Activated CD4-positive, alpha-beta memory T cell treated with anti-CD3 and anti-CD28 coated beads for 36 hours (primary cell): ENCODE measurements at regions of chr12 and their contacts with region 1.

Region 1: DNA sequence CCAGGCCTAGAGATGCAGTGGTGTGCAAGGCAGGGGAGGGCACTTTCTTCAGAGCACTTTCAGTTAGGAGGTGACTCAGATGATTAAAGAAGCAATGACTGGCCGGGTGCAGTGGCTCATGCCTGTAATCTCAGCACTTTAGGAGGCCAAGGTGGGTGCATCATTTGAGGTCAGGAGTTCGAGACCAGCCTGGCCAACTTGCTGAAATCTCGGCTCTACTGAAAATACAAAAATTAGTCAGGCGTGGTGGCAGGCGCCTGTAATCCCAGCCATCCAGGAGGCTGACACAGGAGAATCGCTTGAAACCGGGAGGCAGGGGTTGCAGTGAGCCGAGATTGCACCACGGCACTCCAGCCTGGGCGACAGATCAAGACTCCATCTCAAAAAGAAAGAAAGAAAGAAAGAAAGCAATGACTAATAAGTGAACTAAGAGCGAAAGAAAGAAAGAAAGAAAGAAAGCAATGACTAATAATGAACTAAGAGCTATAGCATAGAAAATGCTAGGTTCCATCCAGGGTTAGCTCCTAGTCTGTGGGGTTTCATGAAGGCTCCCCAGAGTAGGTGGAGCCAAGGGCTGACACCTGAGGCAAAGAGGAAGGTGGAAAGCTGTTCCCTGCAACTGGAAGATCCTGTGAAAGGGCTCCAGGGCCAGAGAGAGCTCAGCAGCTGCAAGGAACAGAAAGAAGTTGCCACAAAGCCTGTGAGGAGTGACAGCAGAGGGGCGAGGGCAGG is 334.5 kb downstream of the CACNA1C start:
- DNase-seq: peak; percentile 75
- H3K4me3 Mint-ChIP-seq: no peak overlapping the region
- H3K27ac Mint-ChIP-seq: no peak overlapping the region
- H3K4me1 Mint-ChIP-seq: no peaks in the 10 kb centered on the region
- H3K27me3 Mint-ChIP-seq: peaks cover 23% of the 10 kb centered on the region

Region 2: GRCh38 chr12:2358986-2359658 is 28.1 kb before region 1 on chr12:
- CTCF ChIA-PET with region 1: no interaction called
- POLR2A ChIA-PET with region 1: no interaction called
- intact Hi-C with region 1: loop called (anchors 1 kb)
- DNase-seq: no peak
- H3K4me3 Mint-ChIP-seq: no peak overlapping the region
- H3K27ac Mint-ChIP-seq: no peak overlapping the region
- H3K4me1 Mint-ChIP-seq: peaks cover 19% of the 10 kb centered on the region
- H3K27me3 Mint-ChIP-seq: peaks cover 16% of the 10 kb centered on the region

Region 3: DNA sequence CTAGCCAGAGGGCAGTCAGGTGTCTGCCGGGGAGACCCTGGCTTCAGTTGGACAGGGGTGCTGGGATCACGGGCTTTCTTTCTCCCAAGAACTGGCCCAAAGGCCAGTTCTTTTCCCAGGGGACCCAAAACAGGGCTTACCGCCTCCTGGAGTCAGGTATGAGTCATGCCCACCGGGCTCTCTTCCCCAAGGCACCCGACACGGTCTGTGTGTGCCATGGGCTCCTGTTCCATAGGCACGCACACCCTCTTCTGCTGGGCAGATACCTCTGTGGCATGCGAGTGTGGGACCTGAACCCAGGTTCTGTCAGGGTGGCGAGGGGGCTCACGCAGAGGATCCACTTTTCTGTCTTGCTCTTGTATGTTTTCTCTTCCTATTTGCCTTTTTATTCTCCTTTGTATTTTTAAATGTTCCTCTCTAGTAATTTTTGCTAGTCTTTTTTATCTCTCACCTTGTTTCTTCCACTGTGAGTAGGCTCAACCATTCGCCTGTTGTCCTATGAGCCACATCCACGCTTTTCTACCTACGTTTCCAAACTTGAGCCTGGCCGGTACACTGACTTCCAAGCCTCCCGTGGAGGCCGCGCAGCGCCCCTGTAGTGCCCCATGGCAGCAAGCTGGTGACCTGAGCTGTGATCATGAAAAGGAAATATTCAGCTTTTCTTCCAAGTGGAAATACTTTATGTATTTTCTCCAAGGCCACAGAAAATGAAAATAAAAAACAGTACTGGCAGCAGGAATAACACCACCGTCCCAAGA is 27.7 kb after region 1 on chr12:
- CTCF ChIA-PET with region 1: no interaction called
- POLR2A ChIA-PET with region 1: no interaction called
- intact Hi-C with region 1: no loop called
- DNase-seq: no peak
- H3K4me3 Mint-ChIP-seq: no peak overlapping the region
- H3K27ac Mint-ChIP-seq: no peak overlapping the region
- H3K4me1 Mint-ChIP-seq: no peaks in the 10 kb centered on the region
- H3K27me3 Mint-ChIP-seq: peaks cover 4% of the 10 kb centered on the region

Region 4: DNA sequence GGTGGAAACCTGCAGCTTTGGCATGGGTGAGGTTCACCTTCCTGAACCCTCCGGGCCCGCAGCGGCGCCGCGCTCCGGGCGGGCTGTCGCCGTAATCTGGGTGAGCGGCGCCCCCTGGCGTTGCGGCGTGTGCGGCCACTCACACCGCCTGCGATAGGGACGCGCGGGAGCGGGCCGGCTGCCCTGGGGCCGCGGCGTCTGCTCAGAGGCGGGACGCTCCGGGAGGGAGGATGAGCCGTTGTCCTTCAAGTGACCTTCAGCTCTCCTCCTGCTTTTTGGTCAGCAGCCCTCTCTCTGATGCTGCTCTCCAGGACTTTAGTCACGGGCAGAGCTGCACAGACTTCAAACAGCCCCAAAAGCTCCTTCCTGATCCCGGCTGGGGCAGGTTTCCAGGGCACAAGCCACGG is 195.8 kb after region 1 on chr12:
- CTCF ChIA-PET with region 1: interaction called, 3 read pairs
- POLR2A ChIA-PET with region 1: no interaction called
- intact Hi-C with region 1: loop called (anchors 5 kb)
- DNase-seq: peak; percentile 69
- H3K4me3 Mint-ChIP-seq: no peak overlapping the region
- H3K27ac Mint-ChIP-seq: no peak overlapping the region
- H3K4me1 Mint-ChIP-seq: peaks cover 3% of the 10 kb centered on the region
- H3K27me3 Mint-ChIP-seq: peaks cover 30% of the 10 kb centered on the region

Region 5: DNA sequence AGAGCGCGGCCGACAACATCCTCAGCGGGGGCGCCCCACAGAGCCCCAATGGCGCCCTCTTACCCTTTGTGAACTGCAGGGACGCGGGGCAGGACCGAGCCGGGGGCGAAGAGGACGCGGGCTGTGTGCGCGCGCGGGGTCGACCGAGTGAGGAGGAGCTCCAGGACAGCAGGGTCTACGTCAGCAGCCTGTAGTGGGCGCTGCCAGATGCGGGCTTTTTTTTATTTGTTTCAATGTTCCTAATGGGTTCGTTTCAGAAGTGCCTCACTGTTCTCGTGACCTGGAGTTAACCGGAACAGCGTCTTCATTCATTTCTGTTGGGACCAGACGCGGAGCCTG is 303.7 kb after region 1 on chr12:
- CTCF ChIA-PET with region 1: no interaction called
- POLR2A ChIA-PET with region 1: no interaction called
- intact Hi-C with region 1: loop called (anchors 5 kb)
- DNase-seq: peak; percentile 76
- H3K4me3 Mint-ChIP-seq: peak overlapping the region; percentile 81
- H3K27ac Mint-ChIP-seq: peak overlapping the region; percentile 84
- H3K4me1 Mint-ChIP-seq: peaks cover 19% of the 10 kb centered on the region
- H3K27me3 Mint-ChIP-seq: peaks cover 6% of the 10 kb centered on the region